Activated CD8-positive, alpha-beta memory T cell treated with anti-CD3 and anti-CD28 coated beads, Interleukin-2, amount 10 ng/mL, durations not matched to agents 7 days and 5 days (primary cell): ENCODE measurements at regions of chr2 and their contacts with region 1.

Region 1: DNA sequence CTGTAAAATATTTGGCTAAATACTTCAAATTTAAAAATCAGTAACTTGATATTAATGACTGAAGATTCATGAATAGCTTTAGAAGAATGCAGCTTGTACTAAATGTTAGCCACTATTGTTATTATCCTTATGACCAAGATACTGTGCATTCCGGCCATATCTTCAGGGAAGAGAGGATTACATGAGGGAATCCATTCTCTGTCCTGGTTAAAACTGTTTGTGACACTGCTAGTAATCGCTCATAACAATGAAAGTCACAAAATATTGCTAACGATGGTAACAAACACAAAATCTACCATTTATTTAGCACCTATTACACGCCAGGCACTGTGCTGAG is 217.7 kb downstream of the PRKCE start:
- DNase-seq: no peak
- ATAC-seq: no peak
- H3K4me3 Mint-ChIP-seq: no peak overlapping the region
- H3K27ac Mint-ChIP-seq: no peak overlapping the region
- H3K4me1 Mint-ChIP-seq: peaks cover 59% of the 10 kb centered on the region
- H3K27me3 Mint-ChIP-seq: no peaks in the 10 kb centered on the region

Region 2: GRCh38 chr2:45879406-45879805 is 10.3 kb after region 1 on chr2:
- CTCF ChIA-PET with region 1: interaction called, 10 read pairs
- DNase-seq: no peak
- ATAC-seq: no peak
- H3K4me3 Mint-ChIP-seq: no peak overlapping the region
- H3K27ac Mint-ChIP-seq: no peak overlapping the region
- H3K4me1 Mint-ChIP-seq: no peaks in the 10 kb centered on the region
- H3K27me3 Mint-ChIP-seq: no peaks in the 10 kb centered on the region